ENCODE measurements at regions of chr13 and their contacts with region 1.

Region 1: DNA sequence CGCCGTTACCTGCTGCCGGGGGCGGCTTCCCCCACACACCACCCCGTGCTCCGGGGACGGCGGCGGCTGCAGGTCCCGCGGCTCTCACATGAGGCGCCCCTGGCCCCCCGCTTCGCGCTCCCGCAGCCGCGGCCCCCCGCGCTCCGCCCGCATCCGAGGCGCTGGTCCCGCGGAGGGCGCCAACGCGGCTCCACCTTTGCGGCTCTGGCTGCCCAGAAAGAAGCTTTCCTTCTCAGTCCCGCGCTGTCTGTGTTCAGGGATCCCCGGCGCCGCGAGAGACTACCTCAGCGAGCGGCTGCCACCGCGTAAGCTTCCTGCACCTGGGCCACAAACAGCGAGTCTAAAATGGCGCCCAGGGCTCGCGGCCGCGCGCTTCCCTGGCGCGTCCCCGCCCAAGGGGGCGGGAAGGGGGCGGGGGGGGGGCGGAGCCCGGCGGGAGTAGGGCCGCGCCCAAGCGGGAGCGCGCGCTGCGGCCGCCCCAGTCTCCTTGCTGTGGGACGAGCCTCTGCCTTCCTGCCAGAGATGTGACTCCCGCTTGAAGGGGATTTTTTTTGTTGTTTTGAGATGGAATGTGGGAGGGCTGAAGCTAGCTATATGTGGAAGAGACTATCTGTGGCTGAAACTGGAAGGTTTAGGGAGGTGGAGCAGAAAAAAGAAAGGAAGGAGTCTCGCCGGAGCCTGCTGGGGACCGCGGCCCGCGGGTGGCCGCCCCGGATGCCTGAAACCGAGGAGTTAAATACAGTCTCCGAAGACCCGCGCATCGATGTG is at the start of gene FBXL3:
- DNase-seq: peak; percentile 87
- H3K4me3 ChIP-seq: peak within 1 kb of the TSS; percentile 87
- H3K27ac ChIP-seq: peak within 1 kb of the TSS; percentile 92
- H3K4me1 ChIP-seq: peaks cover 15% of the 10 kb centered on the region
- H3K27me3 ChIP-seq: no peaks in the 10 kb centered on the region
- CTCF ChIP-seq: no peak
- total RNA-seq, gene FBXL3: 24.1 and 29.2 TPM in 2 replicates

Region 2: GRCh38 chr13:77056382-77056781 is 29.4 kb after region 1 on chr13:
- CTCF ChIA-PET with region 1: no interaction called
- POLR2A ChIA-PET with region 1: interaction called, 18 read pairs
- intact Hi-C with region 1: no loop called
- DNase-seq: no peak
- H3K4me3 ChIP-seq: no peak overlapping the region
- H3K27ac ChIP-seq: no peak overlapping the region
- H3K4me1 ChIP-seq: no peaks in the 10 kb centered on the region
- H3K27me3 ChIP-seq: no peaks in the 10 kb centered on the region
- CTCF ChIP-seq: no peak

Region 3: GRCh38 chr13:77329133-77329910 is 302.3 kb after region 1 on chr13:
- CTCF ChIA-PET with region 1: no interaction called
- POLR2A ChIA-PET with region 1: no interaction called
- intact Hi-C with region 1: loop called (anchors 10 kb)
- DNase-seq: peak; percentile 97
- H3K4me3 ChIP-seq: peak overlapping the region; percentile 80
- H3K27ac ChIP-seq: peak overlapping the region; percentile 89
- H3K4me1 ChIP-seq: peaks cover 20% of the 10 kb centered on the region
- H3K27me3 ChIP-seq: no peaks in the 10 kb centered on the region
- CTCF ChIP-seq: no peak

Region 4: GRCh38 chr13:77506874-77507273 is 479.9 kb after region 1 on chr13:
- CTCF ChIA-PET with region 1: no interaction called
- POLR2A ChIA-PET with region 1: no interaction called
- intact Hi-C with region 1: loop called (anchors 5 kb)
- DNase-seq: peak; percentile 49
- H3K4me3 ChIP-seq: no peak overlapping the region
- H3K27ac ChIP-seq: no peak overlapping the region
- H3K4me1 ChIP-seq: peaks cover 35% of the 10 kb centered on the region
- H3K27me3 ChIP-seq: peaks cover 16% of the 10 kb centered on the region
- CTCF ChIP-seq: peak; percentile 56